ENCODE measurements at regions of chr3 and their contacts with region 1.

Region 1: GRCh38 chr3:57227204-57227929 is at the start of gene APPL1:
- DNase-seq: peak; percentile 94
- ATAC-seq: peak; percentile 92
- H3K4me3 Mint-ChIP-seq: peak within 1 kb of the TSS; percentile 88
- H3K27ac Mint-ChIP-seq: peak within 1 kb of the TSS; percentile 78
- H3K4me1 Mint-ChIP-seq: peaks cover 29% of the 10 kb centered on the region
- H3K27me3 Mint-ChIP-seq: no peaks in the 10 kb centered on the region
- total RNA-seq, gene APPL1: 38.4 to 39.4 TPM

Region 2: DNA sequence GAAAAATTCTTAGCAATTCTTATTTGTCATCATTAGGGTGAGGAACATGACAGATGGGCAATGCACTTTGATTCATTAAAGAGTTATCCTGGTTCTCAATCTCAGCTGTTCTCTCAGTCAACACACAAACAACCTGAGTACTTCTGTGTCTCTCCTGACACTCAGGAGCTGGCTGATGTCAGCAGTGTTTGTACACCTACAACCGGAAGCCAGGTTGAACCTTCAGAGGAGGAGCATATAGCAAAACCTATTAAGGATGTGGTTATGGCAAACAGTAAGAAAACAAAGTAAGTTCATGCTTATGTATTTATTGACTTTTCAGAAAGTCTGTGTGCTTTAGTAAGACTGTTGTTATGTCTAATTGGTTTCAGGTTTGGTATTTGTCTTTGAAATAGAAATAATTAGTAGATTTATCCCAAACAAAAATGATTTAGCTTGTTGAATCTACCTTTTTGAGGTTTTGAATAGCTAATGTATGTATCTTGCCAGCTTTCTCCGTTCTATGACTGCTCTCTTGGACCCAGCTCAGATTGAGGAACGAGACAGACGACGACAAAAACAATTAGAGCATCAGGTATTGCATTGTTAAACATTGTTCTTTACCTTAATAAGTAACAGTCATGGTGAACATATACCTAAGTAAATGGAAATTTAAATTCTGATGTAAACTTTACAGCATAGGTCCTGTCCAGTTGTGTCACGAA is 633.8 kb before region 1 on chr3:
- CTCF ChIA-PET with region 1: no interaction called
- POLR2A ChIA-PET with region 1: no interaction called
- intact Hi-C with region 1: no loop called
- DNase-seq: peak; percentile 60
- ATAC-seq: peak; percentile 99
- H3K4me3 Mint-ChIP-seq: peak overlapping the region; percentile 18
- H3K27ac Mint-ChIP-seq: peak overlapping the region; percentile 55
- H3K4me1 Mint-ChIP-seq: peaks cover 66% of the 10 kb centered on the region
- H3K27me3 Mint-ChIP-seq: no peaks in the 10 kb centered on the region

Region 3: GRCh38 chr3:56682462-56683121 is 544.8 kb before region 1 on chr3:
- CTCF ChIA-PET with region 1: no interaction called
- POLR2A ChIA-PET with region 1: no interaction called
- intact Hi-C with region 1: loop called in 1 of 2 experiments (anchors 2 kb)
- DNase-seq: peak; percentile 88
- ATAC-seq: peak; percentile 78
- H3K4me3 Mint-ChIP-seq: peak overlapping the region; percentile 92
- H3K27ac Mint-ChIP-seq: peak overlapping the region; percentile 94
- H3K4me1 Mint-ChIP-seq: peaks cover 38% of the 10 kb centered on the region
- H3K27me3 Mint-ChIP-seq: no peaks in the 10 kb centered on the region

Region 4: DNA sequence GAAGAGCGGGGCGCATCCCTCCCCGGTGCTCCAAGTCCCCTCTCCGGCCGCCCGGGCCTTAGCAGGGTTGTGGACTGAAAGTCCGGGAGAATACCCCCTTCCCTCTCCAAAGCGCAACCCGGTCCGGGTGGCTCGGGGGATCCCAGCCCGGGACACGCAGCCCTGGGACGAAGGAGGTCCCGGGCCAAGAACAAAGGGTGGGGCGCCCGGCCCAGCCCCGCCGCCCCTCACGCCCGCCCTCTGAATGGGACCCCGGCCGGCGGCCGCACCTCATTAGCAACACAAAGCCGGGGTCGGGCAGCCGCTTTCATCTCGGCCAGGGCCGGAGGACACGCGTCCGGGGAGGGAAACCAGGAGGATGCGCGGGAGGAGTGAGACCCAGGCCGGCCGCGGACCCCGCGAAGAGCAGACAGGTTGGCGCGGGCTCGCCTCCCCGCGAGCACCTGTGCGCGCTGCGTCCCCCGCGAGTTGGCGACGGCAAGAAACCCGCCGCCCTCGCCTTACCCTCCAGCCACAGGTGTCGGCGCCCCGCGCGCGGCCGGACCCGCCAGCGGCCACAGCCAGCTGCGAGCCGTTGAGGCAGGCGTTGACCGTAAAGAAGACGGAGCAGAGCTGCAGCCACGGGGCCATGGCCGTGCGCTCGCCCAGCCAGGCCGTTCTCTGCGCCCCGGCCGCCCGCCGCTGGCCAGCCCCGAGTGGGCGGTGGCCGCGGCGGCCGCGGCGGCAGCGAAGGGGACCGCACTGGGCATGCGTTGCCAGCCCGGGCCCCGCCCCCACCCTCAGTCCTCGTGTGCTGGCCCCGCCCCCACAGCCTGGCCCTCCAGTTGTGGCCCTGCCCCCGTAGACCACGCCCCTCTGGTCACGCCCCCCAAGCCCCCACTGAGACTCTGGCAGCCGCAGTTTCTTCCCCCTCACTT is 62.5 kb before region 1 on chr3 and contains the start of gene IL17RD:
- CTCF ChIA-PET with region 1: interaction called, 6 read pairs
- POLR2A ChIA-PET with region 1: no interaction called
- intact Hi-C with region 1: loop called in 1 of 2 experiments (anchors 1 kb)
- DNase-seq: peak; percentile 82
- ATAC-seq: peak; percentile 79
- H3K4me3 Mint-ChIP-seq: peak within 1 kb of the TSS; percentile 68
- H3K27ac Mint-ChIP-seq: no peak within 1 kb of the TSS
- H3K4me1 Mint-ChIP-seq: peaks cover 7% of the 10 kb centered on the region
- H3K27me3 Mint-ChIP-seq: peaks cover 61% of the 10 kb centered on the region
- total RNA-seq, gene IL17RD: 0.05 to 0.18 TPM

Region 5: DNA sequence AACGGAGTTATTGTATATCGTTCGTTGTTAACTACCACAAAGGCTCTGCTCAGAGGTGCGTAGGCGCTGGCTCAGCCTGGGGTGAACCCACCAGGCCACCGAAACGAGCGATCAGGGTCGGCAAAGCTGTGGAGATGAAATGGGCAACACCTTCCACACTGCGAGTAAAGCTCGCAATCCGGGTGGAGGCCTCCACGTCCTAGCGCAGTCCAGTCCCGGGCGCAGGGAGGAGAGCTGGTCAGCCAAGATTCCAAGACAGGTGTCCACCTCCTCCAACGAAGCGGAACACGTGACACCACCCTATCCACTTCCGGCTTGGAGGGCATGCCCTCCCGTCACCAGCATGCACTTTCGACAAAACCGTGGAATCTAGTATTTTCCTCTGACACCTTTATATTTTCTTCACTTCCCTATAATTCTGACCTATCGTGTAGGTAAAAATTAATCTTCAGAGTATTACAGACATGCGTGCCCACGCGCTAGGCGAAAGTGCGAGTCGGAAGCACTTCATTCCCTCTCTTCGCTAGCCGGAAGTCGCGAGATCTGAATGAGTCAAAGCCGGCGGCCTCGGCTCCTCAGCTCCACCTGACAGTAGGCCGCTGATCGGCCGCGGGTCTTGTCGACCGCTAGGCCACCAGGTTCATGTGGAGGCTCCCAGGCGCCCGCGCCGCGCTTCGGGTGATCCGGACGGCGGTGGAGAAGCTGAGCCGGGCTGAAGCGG is 328.5 kb after region 1 on chr3 and contains the start of gene PDE12:
- CTCF ChIA-PET with region 1: no interaction called
- POLR2A ChIA-PET with region 1: no interaction called
- intact Hi-C with region 1: loop called in 1 of 2 experiments (anchors 1 kb)
- DNase-seq: peak; percentile 91
- ATAC-seq: peak; percentile 82
- H3K4me3 Mint-ChIP-seq: peak within 1 kb of the TSS; percentile 91
- H3K27ac Mint-ChIP-seq: peak within 1 kb of the TSS; percentile 100
- H3K4me1 Mint-ChIP-seq: peaks cover 29% of the 10 kb centered on the region
- H3K27me3 Mint-ChIP-seq: no peaks in the 10 kb centered on the region
- total RNA-seq, gene PDE12: 19.2 to 19.9 TPM

Region 6: DNA sequence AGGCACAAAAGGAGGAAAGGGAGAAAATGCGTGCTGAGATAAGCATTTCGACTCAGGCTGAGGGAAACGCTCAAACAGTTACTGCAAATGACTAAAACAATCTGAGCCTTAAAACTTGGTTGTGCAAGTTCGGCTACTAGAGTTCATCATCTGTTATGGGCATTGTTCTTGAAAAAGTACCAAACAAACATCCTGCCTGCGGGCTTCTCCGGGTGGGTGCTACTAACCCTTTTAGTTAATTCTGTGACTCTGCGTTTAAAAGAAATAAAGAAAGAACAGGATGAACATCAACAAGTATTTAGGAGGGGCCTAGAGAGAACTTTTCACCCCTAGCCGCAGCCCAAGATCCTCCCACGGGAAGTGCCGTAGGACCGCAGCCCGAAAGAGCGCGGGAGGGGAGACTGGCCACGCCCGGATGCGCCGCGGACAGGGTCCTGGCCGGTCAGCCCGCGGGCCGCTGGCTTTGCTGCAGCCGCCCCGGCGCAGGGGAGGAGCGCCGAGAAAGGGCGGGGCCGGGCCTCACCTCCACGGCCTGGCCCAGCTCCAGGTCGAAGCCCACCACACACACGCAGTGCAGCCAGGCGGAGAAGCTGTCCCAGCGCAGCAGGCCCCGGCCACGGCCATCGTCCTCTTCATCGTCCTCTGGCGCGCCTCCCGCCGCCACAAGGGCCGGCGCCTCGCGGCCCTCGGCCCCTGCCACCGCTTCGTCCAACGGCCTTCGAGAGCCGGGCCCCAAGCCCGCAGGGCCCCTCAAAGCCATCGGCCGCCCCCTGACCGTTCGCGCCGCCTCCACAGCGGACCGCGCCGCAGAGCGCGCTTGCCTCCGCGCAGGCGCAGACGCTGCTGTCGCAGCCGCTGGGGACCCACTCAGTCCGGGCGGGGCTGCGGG is 465.1 kb after region 1 on chr3 and contains the start of gene DENND6A:
- CTCF ChIA-PET with region 1: no interaction called
- POLR2A ChIA-PET with region 1: no interaction called
- intact Hi-C with region 1: loop called (anchors 2 kb)
- DNase-seq: peak; percentile 98
- ATAC-seq: peak; percentile 88
- H3K4me3 Mint-ChIP-seq: peak within 1 kb of the TSS; percentile 87
- H3K27ac Mint-ChIP-seq: peak within 1 kb of the TSS; percentile 85
- H3K4me1 Mint-ChIP-seq: peaks cover 31% of the 10 kb centered on the region
- H3K27me3 Mint-ChIP-seq: no peaks in the 10 kb centered on the region
- total RNA-seq, gene DENND6A: 15.0 to 17.1 TPM

Region 7: GRCh38 chr3:58491506-58492402 is 1264.4 kb after region 1 on chr3 and contains the start of gene KCTD6:
- CTCF ChIA-PET with region 1: no interaction called
- POLR2A ChIA-PET with region 1: no interaction called
- intact Hi-C with region 1: loop called in 1 of 2 experiments (anchors 5 kb)
- DNase-seq: peak; percentile 91
- ATAC-seq: peak; percentile 90
- H3K4me3 Mint-ChIP-seq: peak within 1 kb of the TSS; percentile 84
- H3K27ac Mint-ChIP-seq: peak within 1 kb of the TSS; percentile 90
- H3K4me1 Mint-ChIP-seq: peaks cover 45% of the 10 kb centered on the region
- H3K27me3 Mint-ChIP-seq: peaks cover 6% of the 10 kb centered on the region
- total RNA-seq, gene KCTD6: 7.1 to 7.9 TPM

Measured in activated CD4-positive, alpha-beta T cell treated with anti-CD3 and anti-CD28 coated beads for 36 hours (primary cell).